A549 (cell line): ENCODE measurements at regions of chr7 and their contacts with region 1.

Region 1: DNA sequence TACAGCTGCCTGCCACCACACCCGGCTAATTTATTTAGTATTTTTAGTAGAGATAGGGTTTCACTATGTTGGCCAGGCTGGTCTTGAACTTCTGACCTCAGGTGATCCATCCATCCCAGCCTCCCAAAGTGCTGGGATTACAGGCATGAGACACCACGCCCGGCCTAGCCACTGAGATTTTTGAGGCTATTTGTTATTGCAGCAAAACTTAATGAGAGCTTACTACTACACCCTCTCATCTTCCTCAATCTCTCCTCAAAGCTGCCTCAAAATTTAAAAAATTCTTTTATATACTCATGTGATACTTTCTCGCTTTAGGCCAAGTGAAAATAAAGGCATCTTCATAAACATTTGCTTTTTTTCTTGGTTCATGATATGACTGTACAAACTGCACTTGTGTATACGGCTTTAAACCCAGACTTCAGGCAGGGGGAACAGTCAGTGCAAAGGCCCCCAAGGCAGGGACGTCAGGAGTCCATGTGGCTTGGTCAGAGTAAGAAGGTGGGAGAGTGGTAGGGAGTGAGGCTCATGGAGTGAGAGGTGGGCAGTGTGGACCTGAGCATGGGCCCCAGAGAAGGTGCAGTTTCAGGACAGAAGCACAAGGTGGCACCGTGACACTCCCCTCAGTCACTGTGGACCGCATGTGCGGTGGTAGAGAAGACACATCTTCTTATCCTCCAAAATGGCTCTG is 55.5 kb downstream of the SYPL1 start:
- DNase-seq: peak; percentile 77 to 81
- ATAC-seq: peak; percentile 91 to 99
- H3K4me3 ChIP-seq: no peak overlapping the region
- H3K27ac ChIP-seq: no peak overlapping the region
- H3K4me1 ChIP-seq: no peaks in the 10 kb centered on the region
- CTCF ChIP-seq: peak; percentile 85
- EP300 ChIP-seq: no peak
- POLR2A ChIP-seq: no peak
- RAD21 ChIP-seq: peak; percentile 88 to 94

Region 2: GRCh38 chr7:105594034-105594433 is 462.6 kb before region 1 on chr7:
- CTCF ChIA-PET with region 1: no interaction called
- POLR2A ChIA-PET with region 1: no interaction called
- DNase-seq: no peak
- ATAC-seq: peak in 1 of 2 experiments; percentile 37; a peak in 2 of 6 replicates
- H3K4me3 ChIP-seq: no peak overlapping the region
- H3K27ac ChIP-seq: no peak overlapping the region
- H3K4me1 ChIP-seq: no peaks in the 10 kb centered on the region
- CTCF ChIP-seq: no peak
- EP300 ChIP-seq: no peak
- POLR2A ChIP-seq: no peak
- RAD21 ChIP-seq: no peak

Region 3: DNA sequence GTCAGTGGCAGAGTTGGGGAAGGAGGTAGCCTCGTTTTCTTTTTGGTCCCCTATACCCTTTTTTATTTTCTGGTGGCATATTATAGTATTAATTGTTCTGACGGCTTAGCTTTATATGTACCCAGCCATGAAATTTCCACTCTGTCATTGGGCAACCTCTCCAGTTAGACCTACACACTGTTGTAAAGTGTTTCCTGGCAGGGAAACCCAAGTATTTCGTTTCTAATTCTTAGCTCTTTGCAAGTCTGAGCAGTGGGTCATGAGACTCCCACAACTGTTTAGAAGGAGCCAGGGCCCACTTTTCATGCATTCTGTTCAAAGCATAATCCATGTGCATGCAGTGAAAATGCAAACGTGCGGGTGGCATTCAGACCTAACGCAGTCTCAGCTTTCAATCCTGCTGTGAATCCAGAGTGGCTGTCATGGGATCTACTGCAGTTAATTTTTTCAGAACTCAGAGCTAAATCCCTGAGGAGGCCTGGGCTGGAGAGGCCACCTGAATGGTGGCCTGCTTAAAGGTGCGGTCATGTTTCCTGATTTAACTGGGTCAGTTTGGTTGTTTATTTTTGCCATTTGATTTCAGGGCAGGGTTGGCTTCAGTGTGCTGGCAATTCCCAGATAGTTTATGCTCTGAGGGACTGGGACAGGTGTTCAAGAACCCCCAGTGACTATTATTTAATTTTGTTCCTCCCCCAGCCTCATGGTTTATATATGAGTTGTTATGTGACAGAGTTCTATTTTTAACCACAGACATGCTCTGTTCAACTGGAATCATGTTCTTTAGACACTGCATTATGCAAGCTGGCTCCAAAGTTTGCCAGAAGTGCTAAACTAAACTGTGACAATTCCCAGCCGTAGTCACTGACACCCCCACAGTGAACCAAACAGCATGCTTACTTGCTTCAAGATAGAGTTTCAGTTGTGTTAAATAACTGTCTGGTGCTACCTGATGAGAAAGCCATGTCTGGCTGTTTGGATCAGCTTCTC is 82.9 kb after region 1 on chr7:
- CTCF ChIA-PET with region 1: interaction called, 24 read pairs
- POLR2A ChIA-PET with region 1: no interaction called
- DNase-seq: no peak
- ATAC-seq: no peak
- H3K4me3 ChIP-seq: no peak overlapping the region
- H3K27ac ChIP-seq: no peak overlapping the region
- H3K4me1 ChIP-seq: no peaks in the 10 kb centered on the region
- CTCF ChIP-seq: no peak
- EP300 ChIP-seq: no peak
- POLR2A ChIP-seq: no peak
- RAD21 ChIP-seq: no peak